ENCODE measurements at regions of chr13 and their contacts with region 1.

Region 1: DNA sequence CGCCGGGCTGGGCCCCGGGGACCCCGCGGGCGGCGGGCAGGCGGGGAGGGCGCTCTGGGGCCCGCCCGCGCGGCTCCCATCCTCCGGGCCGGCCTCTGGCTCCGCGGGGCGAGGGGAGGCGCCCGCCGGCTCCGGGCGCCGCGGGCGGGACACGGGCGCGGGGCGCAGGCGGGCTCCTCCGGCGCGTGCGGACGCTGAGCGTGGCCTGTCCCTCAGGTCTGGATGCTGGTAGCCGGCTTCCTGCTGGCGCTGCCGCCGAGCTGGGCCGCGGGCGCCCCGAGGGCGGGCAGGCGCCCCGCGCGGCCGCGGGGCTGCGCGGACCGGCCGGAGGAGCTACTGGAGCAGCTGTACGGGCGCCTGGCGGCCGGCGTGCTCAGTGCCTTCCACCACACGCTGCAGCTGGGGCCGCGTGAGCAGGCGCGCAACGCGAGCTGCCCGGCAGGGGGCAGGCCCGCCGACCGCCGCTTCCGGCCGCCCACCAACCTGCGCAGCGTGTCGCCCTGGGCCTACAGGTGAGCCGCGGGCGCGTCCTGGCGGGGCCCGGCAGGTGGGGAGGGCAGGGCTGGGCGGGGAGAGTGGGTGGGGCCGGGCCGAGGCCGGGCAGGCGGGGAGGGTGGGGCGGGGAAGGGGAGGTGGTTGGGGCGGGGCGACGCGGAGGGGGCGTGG is 414 bp downstream of the IL17D start:
- DNase-seq: peak; percentile 83 to 91
- ATAC-seq: peak; percentile 80
- H3K4me3 ChIP-seq: peak overlapping the region; percentile 79 to 91
- H3K27ac ChIP-seq: no peak overlapping the region
- H3K4me1 ChIP-seq: no peaks in the 10 kb centered on the region
- H3K27me3 ChIP-seq: no peaks in the 10 kb centered on the region

Region 2: DNA sequence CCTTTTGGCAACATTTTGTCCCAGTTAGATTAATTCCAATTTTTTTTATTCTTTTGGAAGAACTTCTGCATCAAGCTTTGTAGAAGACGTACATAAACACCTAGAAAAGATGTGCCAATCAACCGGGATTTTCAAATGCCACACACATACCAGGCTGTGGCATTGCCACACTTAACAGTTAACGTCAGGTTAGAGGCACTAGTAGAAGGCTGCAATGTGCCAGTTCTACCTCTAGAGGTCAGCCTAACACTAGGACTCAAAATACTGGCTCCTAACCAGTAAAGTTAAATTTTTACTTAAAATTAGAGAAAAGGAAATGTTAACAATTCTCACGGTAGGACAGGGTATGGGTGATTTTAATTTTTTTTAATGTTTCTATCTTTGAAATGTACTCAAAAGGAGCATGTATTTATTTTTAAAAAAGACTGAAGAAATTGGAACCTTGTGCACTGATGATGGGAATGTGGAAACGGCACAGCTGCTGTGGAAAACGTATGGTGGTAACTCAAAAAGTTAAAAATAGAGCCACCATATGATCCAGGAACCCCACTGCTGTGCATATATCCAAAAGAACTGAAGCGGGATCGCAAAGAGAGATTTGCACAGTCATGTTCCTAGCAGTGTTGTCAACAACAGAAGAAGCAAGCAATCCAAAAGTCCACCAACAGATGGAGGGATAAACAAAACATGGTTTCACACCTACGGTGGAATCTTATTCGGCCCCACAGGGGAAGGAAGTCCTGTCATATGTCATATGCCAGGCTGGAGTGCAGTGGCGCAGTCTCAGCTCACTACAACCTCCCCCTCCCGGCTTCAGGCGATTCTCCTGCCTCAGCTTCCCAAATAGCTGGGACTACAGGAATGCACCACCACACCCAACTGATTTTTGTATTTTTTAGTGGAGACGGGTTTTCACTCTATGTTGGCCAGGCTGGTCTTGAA is 208.6 kb before region 1 on chr13:
- intact Hi-C with region 1: loop called in 1 of 2 experiments (anchors 10 kb)
- DNase-seq: peak in 1 of 2 donors; percentile 53
- ATAC-seq: peak; percentile 89
- H3K4me3 ChIP-seq: no peak overlapping the region
- H3K27ac ChIP-seq: no peak overlapping the region
- H3K4me1 ChIP-seq: no peaks in the 10 kb centered on the region
- H3K27me3 ChIP-seq: no peaks in the 10 kb centered on the region

Region 3: DNA sequence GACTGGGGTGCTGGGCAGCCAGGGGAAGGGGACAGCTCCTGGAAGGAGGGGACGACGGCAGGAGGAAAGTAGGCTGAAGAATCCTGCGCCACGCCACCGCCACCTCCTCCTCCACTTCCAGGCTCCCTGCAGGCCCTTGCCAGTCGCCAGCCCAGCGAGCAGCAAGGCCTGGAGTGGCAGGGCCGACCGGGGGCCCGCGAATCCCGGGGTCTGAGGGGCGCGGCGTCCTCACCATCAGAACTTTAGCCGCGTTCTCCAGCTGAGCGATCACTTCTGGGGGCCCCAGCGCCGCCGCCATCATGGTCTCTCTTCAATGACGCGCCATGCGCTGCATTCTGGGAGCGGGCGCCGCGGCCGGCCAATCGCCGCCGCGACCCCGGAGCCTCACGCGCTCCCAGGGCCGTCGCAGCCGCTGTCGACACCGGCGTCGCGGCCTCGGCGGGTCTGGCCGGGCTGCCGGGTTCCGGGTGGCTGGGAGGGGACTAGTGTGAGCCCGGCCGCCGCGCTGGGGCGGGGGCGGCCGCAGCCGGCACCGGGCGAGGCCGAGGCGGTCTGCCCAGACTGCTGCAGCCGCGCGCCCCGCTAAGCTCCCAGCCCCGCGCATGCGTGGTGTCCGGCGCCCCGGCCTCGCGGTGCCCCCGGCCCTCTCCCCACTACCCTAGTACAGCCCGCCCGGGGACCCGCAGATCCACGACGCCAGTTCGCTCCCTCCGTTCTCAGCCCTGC is 198.7 kb after region 1 on chr13 and contains the start of gene XPO4:
- intact Hi-C with region 1: loop called in 1 of 2 experiments (anchors 10 kb)
- DNase-seq: peak; percentile 88 to 93
- ATAC-seq: peak; percentile 96
- H3K4me3 ChIP-seq: peak within 1 kb of the TSS; percentile 61 to 75
- H3K27ac ChIP-seq: peak within 1 kb of the TSS; percentile 78 to 83
- H3K4me1 ChIP-seq: peaks cover 0 to 3% of the 10 kb centered on the region in 2 donors
- H3K27me3 ChIP-seq: no peaks in the 10 kb centered on the region
- total RNA-seq, gene XPO4: 11.7 to 14.8 TPM

Region 4: GRCh38 chr13:20924758-20925394 is 221.0 kb after region 1 on chr13:
- intact Hi-C with region 1: loop called in 1 of 2 experiments (anchors 5 kb)
- DNase-seq: peak; percentile 83 to 86
- ATAC-seq: no peak
- H3K4me3 ChIP-seq: no peak overlapping the region
- H3K27ac ChIP-seq: no peak overlapping the region
- H3K4me1 ChIP-seq: no peaks in the 10 kb centered on the region
- H3K27me3 ChIP-seq: no peaks in the 10 kb centered on the region